ENCODE measurements at regions of chr13 and their contacts with region 1.

Region 1: DNA sequence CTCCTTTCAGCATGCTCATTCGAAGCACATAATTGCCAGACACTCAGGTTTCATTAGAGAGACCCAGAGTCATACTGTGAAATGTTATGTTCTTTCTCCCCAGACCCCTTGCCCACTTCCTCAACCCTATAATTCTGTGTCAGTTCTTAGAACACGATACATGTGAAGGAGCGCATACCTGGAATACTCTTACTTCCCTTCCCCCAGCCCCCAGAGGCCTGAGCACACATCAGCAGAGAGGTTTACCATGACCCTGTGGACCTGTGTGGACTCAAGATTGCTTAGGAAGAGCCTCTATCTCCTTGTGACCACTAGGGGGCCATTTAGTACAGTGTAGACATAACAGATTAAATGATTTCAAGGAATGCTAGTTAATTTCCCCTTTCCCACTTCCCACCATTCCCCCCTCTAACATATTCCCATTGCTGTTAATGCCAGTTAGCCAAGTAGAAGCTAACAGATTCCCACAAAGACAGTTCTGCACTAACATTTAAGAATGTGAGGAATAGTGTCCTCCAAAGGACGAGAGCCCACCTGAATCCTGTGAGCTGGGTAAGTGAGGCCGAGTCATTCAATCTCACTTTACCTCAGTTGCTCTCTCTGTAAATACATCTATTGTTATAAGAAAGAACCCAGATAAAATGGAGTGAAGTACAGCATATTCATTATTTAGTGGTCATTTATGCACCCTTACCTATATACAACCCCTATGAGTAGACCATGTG is 154.2 kb upstream of the MAB21L1 start:
- DNase-seq: peak; percentile 33
- H3K4me3 ChIP-seq: no peak overlapping the region
- CTCF ChIP-seq: peak; percentile 76

Region 2: DNA sequence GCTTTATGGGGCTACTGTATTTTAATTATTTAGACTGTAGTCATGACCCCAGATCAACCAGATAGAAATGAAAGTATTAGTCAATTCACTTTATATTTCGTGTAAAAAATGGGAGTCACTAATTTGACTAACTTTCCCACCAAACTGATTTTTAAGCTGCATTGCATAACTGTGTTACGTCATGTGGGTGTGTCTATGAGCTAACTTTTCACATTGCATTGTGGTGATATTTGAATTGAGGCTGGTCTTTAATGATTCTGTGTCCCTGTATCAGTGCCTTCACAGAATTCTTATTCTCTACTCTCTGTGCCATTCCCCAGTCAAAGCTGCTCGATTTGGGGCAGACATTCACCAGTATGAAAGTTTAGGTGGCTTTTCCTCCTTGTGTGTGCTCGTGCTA is 18.4 kb after region 1 on chr13:
- CTCF ChIA-PET with region 1: interaction called, 137 read pairs
- POLR2A ChIA-PET with region 1: no interaction called
- DNase-seq: no peak
- H3K4me3 ChIP-seq: no peak overlapping the region
- CTCF ChIP-seq: no peak

Region 3: DNA sequence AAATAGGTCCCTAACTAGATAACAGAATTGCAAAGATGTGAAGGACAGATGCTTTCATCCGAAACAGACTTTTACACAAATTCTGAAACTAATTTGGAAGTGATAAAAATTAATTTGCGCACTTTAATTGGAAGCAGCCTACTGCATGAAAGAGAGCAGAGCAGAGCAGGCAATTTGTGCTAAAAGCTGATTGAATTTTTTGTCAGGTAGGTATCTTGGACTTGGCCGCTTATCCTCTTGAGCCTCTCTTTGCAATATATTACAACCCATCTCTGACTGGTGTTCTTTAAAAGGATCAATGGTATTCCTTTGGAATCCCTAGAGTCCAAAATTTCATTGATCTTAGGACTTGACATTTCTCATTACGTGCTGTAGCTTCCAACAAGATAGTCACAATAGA is 29.1 kb after region 1 on chr13:
- CTCF ChIA-PET with region 1: interaction called, 26 read pairs
- POLR2A ChIA-PET with region 1: no interaction called
- DNase-seq: no peak
- H3K4me3 ChIP-seq: no peak overlapping the region
- CTCF ChIP-seq: no peak

Region 4: GRCh38 chr13:35699805-35700510 is 69.2 kb after region 1 on chr13:
- CTCF ChIA-PET with region 1: interaction called, 12 read pairs
- POLR2A ChIA-PET with region 1: no interaction called
- DNase-seq: no peak
- H3K4me3 ChIP-seq: peak overlapping the region; percentile 37
- CTCF ChIP-seq: no peak

Region 5: GRCh38 chr13:35712907-35713761 is 82.4 kb after region 1 on chr13:
- CTCF ChIA-PET with region 1: interaction called, 136 read pairs
- POLR2A ChIA-PET with region 1: no interaction called
- DNase-seq: peak; percentile 84
- H3K4me3 ChIP-seq: no peak overlapping the region
- CTCF ChIP-seq: no peak

Region 6: GRCh38 chr13:35720690-35721554 is 90.2 kb after region 1 on chr13:
- CTCF ChIA-PET with region 1: interaction called, 136 read pairs
- POLR2A ChIA-PET with region 1: no interaction called
- DNase-seq: no peak
- H3K4me3 ChIP-seq: peak overlapping the region; percentile 35
- CTCF ChIP-seq: peak; percentile 98

Region 7: GRCh38 chr13:35818633-35819067 is 187.9 kb after region 1 on chr13:
- CTCF ChIA-PET with region 1: interaction called, 10 read pairs
- POLR2A ChIA-PET with region 1: no interaction called
- DNase-seq: no peak
- H3K4me3 ChIP-seq: no peak overlapping the region
- CTCF ChIP-seq: peak; percentile 48

Measured in AG04449 (cell line).